Heart left ventricle (tissue), 16 donors: ENCODE measurements at regions of chr15 and their contacts with region 1.

Region 1: GRCh38 chr15:36501063-36501678 is 78.3 kb upstream of the CDIN1 start:
- DNase-seq: peak in 2 of 5 donors; percentile 21 to 37
- ATAC-seq: peak; percentile 85 to 96 (median 94)
- H3K4me3 ChIP-seq: no peak overlapping the region
- H3K27ac ChIP-seq: peak overlapping the region in 6 of 12 donors; percentile 3 to 36 (median 23)
- H3K4me1 ChIP-seq: peaks cover 0 to 15% (median 2%) of the 10 kb centered on the region in 12 donors
- H3K27me3 ChIP-seq: no peaks in the 10 kb centered on the region
- CTCF ChIP-seq: peak; percentile 41 to 82 (median 70)
- POLR2A ChIP-seq: no peak

Region 2: DNA sequence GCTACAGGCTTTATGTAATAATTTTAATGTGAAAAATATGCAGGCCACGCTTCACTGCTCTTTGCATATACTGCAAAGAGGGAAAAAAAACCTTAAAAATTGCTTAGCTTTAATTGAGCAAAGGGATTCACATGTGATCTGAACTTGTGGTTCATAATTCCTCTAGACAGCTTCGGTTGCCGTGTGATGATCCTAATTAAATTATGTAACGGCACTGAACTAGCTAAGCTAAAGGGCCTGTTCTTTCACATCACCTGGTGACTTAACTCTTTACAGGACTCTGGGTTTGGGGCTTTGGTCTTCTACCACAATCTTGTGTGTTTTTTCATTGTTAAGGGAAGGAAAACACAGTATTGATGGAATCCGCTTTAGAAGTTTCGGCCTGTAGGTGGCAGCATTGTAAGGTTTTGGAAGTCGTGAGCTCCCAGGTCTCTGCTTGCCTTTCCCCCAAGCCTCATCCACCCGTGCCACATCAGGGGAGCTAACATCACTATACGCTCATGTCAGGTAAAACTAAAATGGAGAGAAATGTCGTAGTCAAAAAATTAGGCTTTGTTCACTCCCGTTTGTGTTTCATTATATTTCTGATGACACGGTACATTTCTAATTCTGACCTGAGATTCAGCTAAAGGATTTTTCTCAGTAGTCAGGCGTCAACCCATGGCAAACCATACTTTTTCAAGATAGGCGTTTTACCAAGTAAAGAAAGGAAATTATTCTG is 749.6 kb before region 1 on chr15:
- intact Hi-C with region 1: loop called in 1 of 10 experiments (anchors 10 kb)
- DNase-seq: peak in 4 of 5 donors; percentile 66 to 80 (median 72)
- ATAC-seq: peak; percentile 79 to 91 (median 86)
- H3K4me3 ChIP-seq: peak overlapping the region in 2 of 12 donors; percentile 6 to 13
- H3K27ac ChIP-seq: no peak overlapping the region
- H3K4me1 ChIP-seq: peaks cover 0 to 21% (median 0%) of the 10 kb centered on the region in 12 donors
- H3K27me3 ChIP-seq: no peaks in the 10 kb centered on the region
- CTCF ChIP-seq: peak; percentile 57 to 84 (median 78)
- POLR2A ChIP-seq: no peak

Region 3: GRCh38 chr15:36591536-36592411 is 90.6 kb after region 1 on chr15:
- intact Hi-C with region 1: loop called in 1 of 10 experiments (anchors 10 kb)
- DNase-seq: peak in 4 of 5 donors; percentile 36 to 50 (median 46)
- ATAC-seq: peak in 1 of 4 donors; percentile 28
- H3K4me3 ChIP-seq: no peak overlapping the region
- H3K27ac ChIP-seq: peak overlapping the region in 10 of 12 donors; percentile 14 to 97 (median 69)
- H3K4me1 ChIP-seq: peaks cover 0 to 22% (median 7%) of the 10 kb centered on the region in 12 donors
- H3K27me3 ChIP-seq: no peaks in the 10 kb centered on the region
- CTCF ChIP-seq: no peak
- POLR2A ChIP-seq: no peak

Region 4: DNA sequence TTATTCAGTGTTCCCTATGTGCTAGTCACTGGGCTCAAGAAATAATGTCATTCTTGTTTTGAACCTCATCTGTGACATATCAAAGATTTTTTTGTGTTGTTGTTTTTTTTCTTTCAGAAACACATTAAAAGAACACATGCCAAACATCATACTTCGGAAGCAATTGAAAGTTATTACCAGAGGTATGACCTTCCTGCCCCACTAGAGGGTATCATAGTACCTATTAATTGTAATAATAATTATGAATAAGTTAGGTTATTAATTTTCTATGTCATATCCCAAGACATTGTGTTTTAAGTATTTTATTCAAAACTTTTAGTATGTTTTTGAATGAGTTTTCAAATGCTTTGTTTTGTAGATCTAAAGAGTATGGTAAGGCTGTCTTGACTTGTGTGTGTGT is 143.9 kb after region 1 on chr15:
- intact Hi-C with region 1: loop called in 1 of 10 experiments (anchors 10 kb)
- DNase-seq: no peak
- ATAC-seq: no peak
- H3K4me3 ChIP-seq: no peak overlapping the region
- H3K27ac ChIP-seq: no peak overlapping the region
- H3K4me1 ChIP-seq: peaks cover 0 to 10% (median 0%) of the 10 kb centered on the region in 12 donors
- H3K27me3 ChIP-seq: no peaks in the 10 kb centered on the region
- CTCF ChIP-seq: peak in 8 of 12 donors; percentile 12 to 33 (median 18)
- POLR2A ChIP-seq: no peak

Region 5: GRCh38 chr15:37125143-37125542 is 624.0 kb after region 1 on chr15:
- intact Hi-C with region 1: loop called in 6 of 10 experiments (anchors 10 kb)
- DNase-seq: no peak
- ATAC-seq: no peak
- H3K4me3 ChIP-seq: no peak overlapping the region
- H3K27ac ChIP-seq: no peak overlapping the region
- H3K4me1 ChIP-seq: peaks cover 0 to 5% (median 0%) of the 10 kb centered on the region in 12 donors
- H3K27me3 ChIP-seq: no peaks in the 10 kb centered on the region
- CTCF ChIP-seq: no peak
- POLR2A ChIP-seq: no peak